ENCODE measurements at regions of chr14 and their contacts with region 1.

Region 1: GRCh38 chr14:49892636-49893308 is at the start of gene ARF6:
- DNase-seq: peak; percentile 81 to 96 (median 90)
- ATAC-seq: peak; percentile 84 to 89 (median 88)
- H3K4me3 ChIP-seq: peak within 1 kb of the TSS; percentile 98 to 99
- H3K4me3 Mint-ChIP-seq: peak within 1 kb of the TSS; percentile 93 to 98 (median 97)
- H3K27ac ChIP-seq: peak within 1 kb of the TSS; percentile 98
- H3K27ac Mint-ChIP-seq: peak within 1 kb of the TSS; percentile 99
- H3K4me1 ChIP-seq: peaks cover 15 to 25% of the 10 kb centered on the region in 2 experiments
- H3K4me1 Mint-ChIP-seq: peaks cover 29 to 52% (median 32%) of the 10 kb centered on the region in 3 donors
- H3K27me3 ChIP-seq: no peaks in the 10 kb centered on the region
- H3K27me3 Mint-ChIP-seq: no peaks in the 10 kb centered on the region
- total RNA-seq, gene ARF6: 72.0 to 111 (median 93.6) TPM

Region 2: DNA sequence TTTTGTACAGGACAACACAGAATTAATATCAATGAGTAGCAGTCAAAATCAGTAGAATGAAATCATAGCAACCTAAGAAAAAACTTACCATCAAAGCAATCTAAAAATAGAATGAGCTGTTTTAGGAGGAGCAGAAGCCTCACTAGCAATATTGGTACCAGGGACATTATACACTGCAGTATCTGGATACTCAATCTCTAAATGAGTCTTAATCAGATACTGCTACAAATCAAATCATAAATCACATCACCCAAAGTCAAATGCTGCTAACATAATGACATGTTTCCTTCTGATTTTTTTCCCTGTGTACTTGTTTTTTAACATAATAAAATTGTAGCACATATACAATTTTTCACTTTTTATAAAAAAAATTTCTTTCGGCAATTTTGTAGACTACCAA is 314.6 kb before region 1 on chr14:
- CTCF ChIA-PET with region 1: no interaction called
- POLR2A ChIA-PET with region 1: no interaction called
- DNase-seq: no peak
- ATAC-seq: no peak
- H3K4me3 ChIP-seq: no peak overlapping the region
- H3K4me3 Mint-ChIP-seq: no peak overlapping the region
- H3K27ac ChIP-seq: no peak overlapping the region
- H3K27ac Mint-ChIP-seq: peak overlapping the region in 1 of 2 donors; percentile 61
- H3K4me1 ChIP-seq: peaks cover 0 to 12% of the 10 kb centered on the region in 2 experiments
- H3K4me1 Mint-ChIP-seq: peaks cover 41 to 45% (median 42%) of the 10 kb centered on the region in 3 donors
- H3K27me3 ChIP-seq: no peaks in the 10 kb centered on the region
- H3K27me3 Mint-ChIP-seq: no peaks in the 10 kb centered on the region

Region 3: DNA sequence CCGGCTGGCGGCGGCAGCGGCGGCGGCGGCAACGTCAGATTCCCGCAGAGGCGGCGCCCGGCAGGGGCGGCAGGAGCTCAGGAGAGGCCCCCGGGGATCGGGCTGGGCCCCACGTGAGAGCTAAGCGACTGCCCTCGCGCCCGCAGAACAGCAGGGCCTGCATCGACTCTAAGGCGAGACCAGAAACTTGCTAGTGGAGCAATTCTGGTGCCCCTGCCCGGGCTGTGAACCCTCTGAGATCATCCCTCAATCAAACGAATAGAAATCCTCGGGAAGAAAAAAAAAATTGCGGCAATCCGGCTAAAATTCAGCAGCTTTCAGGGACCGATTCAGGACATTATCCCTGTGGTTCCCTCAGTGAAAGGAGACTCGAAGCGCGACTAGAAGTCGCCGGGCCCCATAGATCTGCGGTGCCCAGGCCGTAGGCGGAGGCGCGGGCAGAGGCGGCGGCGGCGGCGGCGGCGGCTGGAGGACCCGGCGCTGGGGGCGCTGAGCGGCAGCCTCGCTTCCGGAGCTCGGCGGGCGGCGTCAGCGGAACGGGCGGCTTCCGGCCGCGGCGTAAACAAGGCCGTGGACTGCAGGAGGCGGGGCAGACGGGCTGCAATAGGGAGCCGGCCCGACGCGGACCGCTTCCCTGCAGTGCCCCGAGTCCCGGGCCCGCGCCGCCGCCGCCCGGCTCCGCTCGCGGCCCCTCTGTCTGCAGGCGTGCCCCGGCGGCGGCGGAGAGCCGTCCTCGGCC is 125.0 kb before region 1 on chr14 and contains the start of gene KLHDC2:
- CTCF ChIA-PET with region 1: no interaction called
- POLR2A ChIA-PET with region 1: interaction called in 1 of 2 experiments, 15 read pairs
- DNase-seq: peak; percentile 78 to 93 (median 86)
- ATAC-seq: peak; percentile 81 to 91 (median 88)
- H3K4me3 ChIP-seq: peak within 1 kb of the TSS; percentile 98 to 99
- H3K4me3 Mint-ChIP-seq: peak within 1 kb of the TSS; percentile 92 to 98 (median 95)
- H3K27ac ChIP-seq: peak within 1 kb of the TSS; percentile 98
- H3K27ac Mint-ChIP-seq: peak within 1 kb of the TSS; percentile 98 to 99
- H3K4me1 ChIP-seq: peaks cover 10 to 32% of the 10 kb centered on the region in 2 experiments
- H3K4me1 Mint-ChIP-seq: peaks cover 33 to 40% (median 38%) of the 10 kb centered on the region in 3 donors
- H3K27me3 ChIP-seq: no peaks in the 10 kb centered on the region
- H3K27me3 Mint-ChIP-seq: no peaks in the 10 kb centered on the region
- total RNA-seq, gene KLHDC2: 69.0 to 115 (median 69.2) TPM